PC-9 (cell line): ENCODE measurements at regions of chr3 and their contacts with region 1.

Region 1: GRCh38 chr3:195894780-195895607 is 13.4 kb downstream of the TNK2 start:
- DNase-seq: peak; percentile 84 to 86
- H3K4me3 ChIP-seq: peak overlapping the region; percentile 96
- H3K27ac ChIP-seq: peak overlapping the region; percentile 42
- H3K4me1 ChIP-seq: peaks cover 34% of the 10 kb centered on the region
- H3K27me3 ChIP-seq: no peaks in the 10 kb centered on the region
- CTCF ChIP-seq: peak; percentile 98

Region 2: GRCh38 chr3:195732940-195733339 is 162.1 kb before region 1 on chr3:
- CTCF ChIA-PET with region 1: interaction called, 15 read pairs
- POLR2A ChIA-PET with region 1: no interaction called
- intact Hi-C with region 1: no loop called
- DNase-seq: no peak
- H3K4me3 ChIP-seq: no peak overlapping the region
- H3K27ac ChIP-seq: no peak overlapping the region
- H3K4me1 ChIP-seq: no peaks in the 10 kb centered on the region
- H3K27me3 ChIP-seq: no peaks in the 10 kb centered on the region
- CTCF ChIP-seq: no peak

Region 3: DNA sequence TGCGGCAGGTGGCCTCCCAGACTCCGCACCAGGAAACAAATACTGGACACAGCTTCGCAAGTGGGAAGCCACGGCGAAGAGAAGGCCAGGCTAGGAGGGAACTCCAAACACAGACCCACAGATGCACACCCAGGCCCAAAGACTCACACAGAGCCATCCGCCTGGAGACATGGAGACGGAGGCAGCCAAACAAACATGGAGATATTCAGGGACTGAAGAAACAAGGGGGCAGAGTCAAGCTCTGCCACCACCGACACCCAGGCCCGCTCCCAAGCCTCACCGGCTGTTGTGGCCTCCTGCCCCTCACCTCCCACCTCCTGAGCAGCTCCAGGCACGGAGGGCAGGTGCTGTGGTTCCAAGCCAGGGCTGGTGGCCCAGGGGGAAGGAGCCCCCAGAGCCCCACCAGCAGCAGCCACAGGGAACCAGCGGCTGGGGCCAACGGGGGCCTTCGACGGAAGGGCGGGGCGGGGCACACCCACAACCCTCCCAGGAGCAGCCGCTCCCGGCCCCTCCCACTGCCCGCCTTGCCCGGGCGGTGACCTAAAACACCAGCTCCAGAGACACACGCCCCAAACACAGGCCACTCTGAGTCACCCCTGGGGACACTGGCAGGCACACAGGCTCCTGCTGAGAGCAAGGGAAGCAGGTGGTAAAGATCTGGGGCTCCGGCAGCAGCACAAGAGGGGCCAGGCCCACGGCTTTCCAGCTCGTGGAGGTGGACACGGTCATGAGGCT is 18.5 kb before region 1 on chr3:
- CTCF ChIA-PET with region 1: interaction called, 19 read pairs
- POLR2A ChIA-PET with region 1: interaction called, 3 read pairs
- intact Hi-C with region 1: no loop called
- DNase-seq: peak; percentile 96 to 97
- H3K4me3 ChIP-seq: peak overlapping the region; percentile 57
- H3K27ac ChIP-seq: peak overlapping the region; percentile 56
- H3K4me1 ChIP-seq: peaks cover 66% of the 10 kb centered on the region
- H3K27me3 ChIP-seq: no peaks in the 10 kb centered on the region
- CTCF ChIP-seq: no peak

Region 4: DNA sequence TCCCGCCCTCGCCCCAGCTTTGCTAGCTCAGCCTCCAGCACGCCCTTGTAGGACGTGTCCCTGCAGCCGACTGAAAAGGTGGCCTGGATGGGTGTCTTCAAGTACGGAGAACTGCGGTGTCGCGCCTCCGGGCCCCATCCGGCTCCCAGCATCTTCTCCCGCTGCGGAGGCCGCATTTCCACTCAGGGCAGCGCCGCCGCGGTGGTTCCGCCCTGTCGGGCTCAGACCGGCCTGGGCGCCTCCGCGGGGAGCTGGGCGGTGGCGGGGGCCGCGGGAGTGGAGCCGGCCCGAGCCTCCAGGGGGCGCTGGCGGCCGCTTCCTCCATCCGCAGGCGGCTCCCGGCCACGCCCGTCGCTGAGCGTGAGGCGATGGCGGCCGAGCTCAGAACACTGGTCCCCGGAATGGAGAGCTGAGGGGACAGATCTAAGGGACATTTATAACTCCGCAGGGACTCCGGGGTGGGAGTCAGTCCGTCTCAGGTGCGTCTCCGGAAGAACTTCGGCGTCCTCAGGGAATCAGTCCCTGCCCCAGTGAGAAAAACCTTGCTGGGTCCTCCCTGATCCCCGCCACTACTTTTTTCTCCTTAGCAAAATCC is 633.7 kb after region 1 on chr3:
- CTCF ChIA-PET with region 1: no interaction called
- POLR2A ChIA-PET with region 1: no interaction called
- intact Hi-C with region 1: no loop called
- DNase-seq: peak; percentile 59 to 93
- H3K4me3 ChIP-seq: peak overlapping the region; percentile 66
- H3K27ac ChIP-seq: no peak overlapping the region
- H3K4me1 ChIP-seq: no peaks in the 10 kb centered on the region
- H3K27me3 ChIP-seq: no peaks in the 10 kb centered on the region
- CTCF ChIP-seq: peak; percentile 89